ENCODE measurements at regions of chr1 and their contacts with region 1.

Region 1: DNA sequence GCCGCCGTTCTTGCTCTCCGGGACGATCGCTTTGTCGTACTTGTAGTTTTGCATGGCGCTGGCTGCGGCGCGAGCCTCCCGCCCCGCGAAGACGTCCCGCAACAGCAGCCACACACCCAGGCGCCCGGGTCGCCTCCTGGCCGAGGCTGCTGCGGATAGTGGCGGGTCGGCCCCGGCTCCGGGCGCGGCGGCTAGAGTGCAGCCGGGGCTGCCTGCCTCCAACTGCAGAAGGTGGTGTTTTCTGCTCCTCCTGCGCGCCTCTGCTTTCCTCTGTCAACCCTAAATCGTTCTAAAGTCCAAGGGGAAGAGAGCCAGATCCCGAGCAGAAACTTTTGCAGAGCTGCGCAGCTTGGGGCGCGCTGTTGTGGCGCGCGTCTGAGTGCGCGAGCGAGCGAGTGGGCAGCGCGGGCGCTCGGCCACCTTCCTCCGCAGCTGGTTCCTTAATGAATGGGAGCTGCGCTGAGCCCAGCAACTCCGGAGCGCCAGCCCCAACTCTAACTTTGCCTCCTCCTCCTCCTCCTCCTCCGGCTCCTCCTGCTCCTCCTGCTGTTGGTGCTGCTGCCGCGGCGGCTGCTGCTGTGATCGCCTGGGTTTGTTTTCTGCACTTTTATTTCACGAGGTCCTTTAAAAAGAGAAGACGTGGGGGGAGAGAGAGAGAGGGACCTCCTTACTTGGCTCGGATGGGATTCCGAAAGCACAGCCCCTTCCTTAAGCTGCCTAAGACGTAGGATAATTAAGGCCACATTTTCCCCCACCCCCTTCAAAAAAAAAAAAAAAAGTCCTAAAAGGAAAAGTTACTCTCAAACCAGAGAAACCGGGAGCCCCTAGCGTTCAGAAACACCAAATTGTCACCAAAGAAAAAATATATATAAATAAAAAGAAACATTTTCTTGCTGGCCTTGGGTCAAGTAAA is at the start of gene PLPP3:
- DNase-seq: peak; percentile 91 to 95 (median 94)
- ATAC-seq: peak; percentile 93 to 94
- H3K4me3 ChIP-seq: peak within 1 kb of the TSS; percentile 84
- H3K27ac ChIP-seq: peak within 1 kb of the TSS; percentile 91
- H3K4me1 ChIP-seq: peaks cover 2% of the 10 kb centered on the region
- H3K27me3 ChIP-seq: no peaks in the 10 kb centered on the region
- total RNA-seq, gene PLPP3: 85.4 to 120 (median 94.6) TPM

Region 2: DNA sequence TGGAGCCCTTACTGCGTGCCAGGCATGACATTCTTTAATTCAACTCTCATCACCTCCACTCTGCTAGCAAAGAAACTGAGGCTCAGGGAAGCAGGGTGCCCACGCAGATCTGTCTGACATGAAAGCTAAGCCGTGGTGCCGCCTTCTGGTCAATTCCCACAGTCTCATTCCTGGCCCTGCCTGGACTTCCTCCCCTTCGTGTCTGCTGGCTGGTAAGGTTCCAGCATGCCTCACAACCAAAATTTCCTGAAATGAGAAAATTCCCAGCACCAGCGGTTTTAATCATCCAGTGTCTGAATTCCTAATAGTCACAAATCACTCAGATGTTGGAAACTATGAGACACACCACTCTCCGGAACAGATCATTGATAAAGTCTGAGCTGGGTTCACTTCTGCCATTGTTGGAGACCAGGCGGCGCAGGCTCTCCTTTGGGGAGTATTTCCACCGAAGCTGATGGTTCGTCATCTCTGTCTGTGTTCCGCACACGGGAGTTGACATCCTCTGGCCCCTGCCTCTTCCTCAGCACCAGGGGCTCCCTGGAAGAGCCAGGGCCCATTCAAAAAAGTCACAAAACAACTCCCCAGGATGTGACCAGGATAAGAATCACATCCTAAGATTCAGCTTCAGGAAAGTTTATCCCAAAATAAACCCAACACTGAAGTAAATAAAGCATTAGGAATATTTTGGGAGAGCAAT is 167.6 kb before region 1 on chr1:
- intact Hi-C with region 1: loop called in 1 of 4 experiments (anchors 5 kb)
- DNase-seq: peak; percentile 70 to 85 (median 73)
- ATAC-seq: peak; percentile 82 to 95
- H3K4me3 ChIP-seq: no peak overlapping the region
- H3K27ac ChIP-seq: peak overlapping the region; percentile 56
- H3K4me1 ChIP-seq: peaks cover 3% of the 10 kb centered on the region
- H3K27me3 ChIP-seq: no peaks in the 10 kb centered on the region

Region 3: GRCh38 chr1:56434740-56435139 is 144.5 kb before region 1 on chr1:
- intact Hi-C with region 1: loop called in 2 of 4 experiments (anchors 5 to 10 kb)
- DNase-seq: no peak
- ATAC-seq: no peak
- H3K4me3 ChIP-seq: no peak overlapping the region
- H3K27ac ChIP-seq: no peak overlapping the region
- H3K4me1 ChIP-seq: peaks cover 20% of the 10 kb centered on the region
- H3K27me3 ChIP-seq: no peaks in the 10 kb centered on the region

Region 4: GRCh38 chr1:56477164-56478111 is 101.8 kb before region 1 on chr1:
- intact Hi-C with region 1: loop called in 1 of 4 experiments (anchors 10 kb)
- DNase-seq: peak; percentile 79 to 91 (median 90)
- ATAC-seq: peak; percentile 91 to 94
- H3K4me3 ChIP-seq: peak overlapping the region; percentile 88
- H3K27ac ChIP-seq: peak overlapping the region; percentile 88
- H3K4me1 ChIP-seq: peaks cover 11% of the 10 kb centered on the region
- H3K27me3 ChIP-seq: no peaks in the 10 kb centered on the region

Region 5: GRCh38 chr1:56508523-56508983 is 70.7 kb before region 1 on chr1:
- intact Hi-C with region 1: loop called in 3 of 4 experiments (anchors 5 to 10 kb)
- DNase-seq: peak; percentile 57 to 77 (median 71)
- ATAC-seq: peak; percentile 66 to 79
- H3K4me3 ChIP-seq: no peak overlapping the region
- H3K27ac ChIP-seq: peak overlapping the region; percentile 75
- H3K4me1 ChIP-seq: peaks cover 50% of the 10 kb centered on the region
- H3K27me3 ChIP-seq: no peaks in the 10 kb centered on the region

Region 6: DNA sequence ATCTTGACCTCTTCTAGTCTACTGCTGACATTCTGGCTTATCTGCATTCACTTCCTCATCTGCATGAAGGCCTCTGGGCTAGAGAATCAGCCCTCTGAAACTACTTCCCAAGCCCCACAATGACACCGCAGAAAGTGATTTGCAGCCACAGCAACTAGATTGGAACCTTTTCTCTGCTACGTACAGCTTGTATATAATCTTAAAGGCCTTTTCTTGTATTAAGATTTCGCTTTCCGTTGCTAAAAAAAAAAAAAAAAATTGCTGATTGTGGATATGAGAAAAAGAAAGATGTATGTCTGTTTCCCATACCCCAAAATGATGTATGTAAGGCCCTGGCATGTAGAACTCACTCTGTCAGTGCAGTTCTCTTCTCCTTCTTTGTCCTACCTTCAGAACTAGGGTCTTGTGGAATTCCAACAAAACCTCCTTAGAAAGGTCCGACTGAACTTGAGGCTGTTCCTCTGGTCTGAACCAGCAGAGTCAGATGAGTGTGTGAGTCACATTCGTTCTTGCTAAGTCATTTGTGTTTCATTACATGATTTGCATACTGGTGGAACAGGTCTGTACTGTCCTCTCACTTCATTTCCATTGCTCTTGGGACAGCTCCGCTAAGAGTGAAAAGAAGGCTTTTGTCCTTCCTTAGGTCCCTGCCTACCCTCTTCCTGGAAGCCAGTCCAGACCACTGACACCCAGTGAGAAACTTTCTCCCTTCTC is 62.5 kb before region 1 on chr1:
- intact Hi-C with region 1: loop called in 2 of 4 experiments (anchors 5 to 10 kb)
- DNase-seq: no peak
- ATAC-seq: peak in 1 of 2 donors; percentile 42
- H3K4me3 ChIP-seq: no peak overlapping the region
- H3K27ac ChIP-seq: peak overlapping the region; percentile 30
- H3K4me1 ChIP-seq: peaks cover 25% of the 10 kb centered on the region
- H3K27me3 ChIP-seq: no peaks in the 10 kb centered on the region

Measured in right cardiac atrium (tissue), 5 donors.